Activated CD8-positive, alpha-beta T cell treated with anti-CD3 and anti-CD28 coated beads for 36 hours (primary cell): ENCODE measurements at regions of chr9 and their contacts with region 1.

Region 1: GRCh38 chr9:6667633-6668280 is 22.2 kb upstream of the GLDC start:
- DNase-seq: no peak
- ATAC-seq: peak; percentile 53
- H3K4me3 Mint-ChIP-seq: no peak overlapping the region
- H3K27ac Mint-ChIP-seq: no peak overlapping the region
- H3K4me1 Mint-ChIP-seq: no peaks in the 10 kb centered on the region
- H3K27me3 Mint-ChIP-seq: no peaks in the 10 kb centered on the region
- CTCF ChIP-seq: peak; percentile 72

Region 2: DNA sequence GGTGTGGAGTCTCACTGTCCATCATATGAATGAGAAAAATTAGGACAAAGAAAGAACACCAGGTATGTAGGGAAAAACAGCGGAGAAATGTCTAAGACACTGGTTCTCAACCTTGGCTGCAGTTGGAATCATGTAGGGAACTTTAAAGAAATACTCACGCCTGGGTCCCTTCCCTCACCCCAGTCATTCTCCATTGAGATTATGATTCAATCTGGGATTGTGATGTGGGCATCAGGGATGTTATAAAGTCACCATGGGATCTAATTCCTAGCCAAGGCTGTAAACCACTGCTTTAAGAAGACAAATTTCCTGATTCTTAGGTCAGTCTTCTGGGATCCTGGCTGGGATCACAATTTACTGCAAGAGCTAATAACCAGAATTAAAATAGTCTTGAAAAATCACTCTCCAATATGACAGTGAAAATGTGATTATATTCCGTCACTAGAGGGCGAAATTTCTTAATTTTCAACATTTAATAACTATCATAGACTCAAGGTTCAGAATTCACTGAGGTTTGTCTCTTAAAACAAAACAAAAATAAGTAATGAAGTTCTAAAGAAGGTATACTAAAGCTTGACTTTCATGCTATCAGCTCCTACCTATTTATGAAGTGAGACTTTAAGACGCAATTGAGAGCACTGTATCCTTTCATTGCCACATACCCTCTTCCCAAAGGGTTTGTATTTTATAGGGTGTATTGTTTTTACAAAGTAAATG is 82.7 kb before region 1 on chr9:
- CTCF ChIA-PET with region 1: interaction called, 12 read pairs
- POLR2A ChIA-PET with region 1: interaction called, 3 read pairs
- intact Hi-C with region 1: loop called (anchors 1 kb)
- DNase-seq: no peak
- ATAC-seq: no peak
- H3K4me3 Mint-ChIP-seq: no peak overlapping the region
- H3K27ac Mint-ChIP-seq: no peak overlapping the region
- H3K4me1 Mint-ChIP-seq: no peaks in the 10 kb centered on the region
- H3K27me3 Mint-ChIP-seq: no peaks in the 10 kb centered on the region
- CTCF ChIP-seq: peak; percentile 69